Head of caudate nucleus (tissue), 42 donors: ENCODE measurements at regions of chr3 and their contacts with region 1.

Region 1: GRCh38 chr3:64030741-64031140 is 7.4 kb upstream of the PSMD6 start:
- DNase-seq: peak; percentile 46 to 92 (median 80)

Region 2: GRCh38 chr3:64224826-64225610 is 194.3 kb after region 1 on chr3 and contains the start of gene PRICKLE2:
- intact Hi-C with region 1: loop called (anchors 10 kb)
- DNase-seq: peak; percentile 68 to 95 (median 84)

Region 3: GRCh38 chr3:64399205-64399800 is 368.6 kb after region 1 on chr3:
- intact Hi-C with region 1: loop called (anchors 5 kb)
- DNase-seq: peak in 22 of 42 donors; percentile 8 to 74 (median 41)

Region 4: DNA sequence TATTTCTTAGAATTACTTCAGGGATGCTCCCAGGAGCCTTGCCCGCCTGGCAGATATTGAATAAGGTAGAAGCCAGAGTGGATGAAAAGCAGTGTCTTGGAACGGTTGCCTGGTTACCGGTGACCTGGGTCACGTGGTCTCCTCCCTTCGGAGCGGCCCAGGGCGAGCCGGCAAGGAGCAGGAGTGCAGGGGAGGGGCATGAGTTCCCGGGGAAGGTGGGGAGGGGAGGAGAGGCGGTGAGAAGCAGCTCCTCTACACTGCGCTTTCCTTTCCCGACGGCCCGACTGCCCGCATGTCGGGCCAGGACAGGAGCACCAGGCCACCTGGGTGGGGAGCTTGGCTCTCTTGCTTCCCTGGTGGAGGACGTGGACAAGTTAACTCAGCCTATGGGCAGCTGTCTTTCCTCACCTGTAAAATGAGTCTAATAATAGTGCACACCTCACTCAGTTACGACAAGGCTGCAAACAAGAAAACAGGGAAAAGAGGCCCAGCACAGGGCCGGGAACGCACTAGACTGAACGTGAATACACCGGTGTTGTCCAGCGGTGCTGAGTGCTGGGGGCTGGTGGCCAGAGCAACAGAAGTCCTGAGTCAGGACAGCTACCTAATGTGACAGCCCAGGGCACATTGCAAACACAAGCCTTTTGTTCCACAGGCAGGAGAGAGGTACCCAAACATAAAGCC is 458.8 kb after region 1 on chr3:
- intact Hi-C with region 1: loop called (anchors 5 kb)
- DNase-seq: peak; percentile 29 to 88 (median 62)